Naive thymus-derived CD4-positive, alpha-beta T cell (primary cell): ENCODE measurements at regions of chr3 and their contacts with region 1.

Region 1: GRCh38 chr3:17841190-17841828 is 98.9 kb upstream of the TBC1D5 start:
- DNase-seq: peak; percentile 35 to 73 (median 57)
- ATAC-seq: peak; percentile 89
- H3K4me3 ChIP-seq: no peak overlapping the region
- H3K4me3 Mint-ChIP-seq: no peak overlapping the region
- H3K27ac ChIP-seq: no peak overlapping the region
- H3K27ac Mint-ChIP-seq: no peak overlapping the region
- H3K4me1 ChIP-seq: no peaks in the 10 kb centered on the region
- H3K4me1 Mint-ChIP-seq: peaks cover 0 to 2% (median 0%) of the 10 kb centered on the region in 7 donors
- H3K27me3 ChIP-seq: no peaks in the 10 kb centered on the region
- H3K27me3 Mint-ChIP-seq: peaks cover 0 to 8% (median 6%) of the 10 kb centered on the region in 5 donors

Region 2: GRCh38 chr3:17412950-17413530 is 428.3 kb before region 1 on chr3:
- CTCF ChIA-PET with region 1: interaction called, 5 read pairs
- POLR2A ChIA-PET with region 1: no interaction called
- intact Hi-C with region 1: loop called in 1 of 2 experiments (anchors 5 kb)
- DNase-seq: peak in 6 of 9 donors; percentile 21 to 53 (median 41)
- ATAC-seq: peak; percentile 69
- H3K4me3 ChIP-seq: no peak overlapping the region
- H3K4me3 Mint-ChIP-seq: no peak overlapping the region
- H3K27ac ChIP-seq: no peak overlapping the region
- H3K27ac Mint-ChIP-seq: peak overlapping the region in 1 of 9 donors; percentile 51
- H3K4me1 ChIP-seq: no peaks in the 10 kb centered on the region
- H3K4me1 Mint-ChIP-seq: no peaks in the 10 kb centered on the region
- H3K27me3 ChIP-seq: no peaks in the 10 kb centered on the region
- H3K27me3 Mint-ChIP-seq: no peaks in the 10 kb centered on the region

Region 3: DNA sequence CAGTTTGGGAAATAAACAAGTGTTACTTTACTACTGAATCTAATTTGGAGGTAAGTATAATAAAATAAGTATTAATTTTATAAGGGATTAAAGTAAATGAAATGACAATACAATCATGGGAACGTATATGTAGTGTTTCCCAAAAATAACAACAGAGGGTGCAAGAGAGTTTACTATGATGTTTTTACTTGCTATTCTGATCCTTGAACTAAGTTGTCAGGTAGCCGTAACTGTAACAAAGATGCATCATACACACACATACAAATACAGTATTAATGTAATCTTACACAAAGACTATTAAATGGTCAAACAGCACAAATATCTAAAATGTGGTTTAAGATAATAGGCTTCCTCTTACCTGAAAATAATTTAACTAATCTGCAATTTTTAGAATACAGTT is 410.3 kb before region 1 on chr3:
- CTCF ChIA-PET with region 1: interaction called, 5 read pairs
- POLR2A ChIA-PET with region 1: no interaction called
- intact Hi-C with region 1: loop called (anchors 1 kb)
- DNase-seq: peak in 3 of 9 donors; percentile 3 to 12 (median 7)
- ATAC-seq: no peak
- H3K4me3 ChIP-seq: no peak overlapping the region
- H3K4me3 Mint-ChIP-seq: no peak overlapping the region
- H3K27ac ChIP-seq: no peak overlapping the region
- H3K27ac Mint-ChIP-seq: no peak overlapping the region
- H3K4me1 ChIP-seq: no peaks in the 10 kb centered on the region
- H3K4me1 Mint-ChIP-seq: peaks cover 0 to 3% (median 0%) of the 10 kb centered on the region in 7 donors
- H3K27me3 ChIP-seq: no peaks in the 10 kb centered on the region
- H3K27me3 Mint-ChIP-seq: no peaks in the 10 kb centered on the region

Region 4: DNA sequence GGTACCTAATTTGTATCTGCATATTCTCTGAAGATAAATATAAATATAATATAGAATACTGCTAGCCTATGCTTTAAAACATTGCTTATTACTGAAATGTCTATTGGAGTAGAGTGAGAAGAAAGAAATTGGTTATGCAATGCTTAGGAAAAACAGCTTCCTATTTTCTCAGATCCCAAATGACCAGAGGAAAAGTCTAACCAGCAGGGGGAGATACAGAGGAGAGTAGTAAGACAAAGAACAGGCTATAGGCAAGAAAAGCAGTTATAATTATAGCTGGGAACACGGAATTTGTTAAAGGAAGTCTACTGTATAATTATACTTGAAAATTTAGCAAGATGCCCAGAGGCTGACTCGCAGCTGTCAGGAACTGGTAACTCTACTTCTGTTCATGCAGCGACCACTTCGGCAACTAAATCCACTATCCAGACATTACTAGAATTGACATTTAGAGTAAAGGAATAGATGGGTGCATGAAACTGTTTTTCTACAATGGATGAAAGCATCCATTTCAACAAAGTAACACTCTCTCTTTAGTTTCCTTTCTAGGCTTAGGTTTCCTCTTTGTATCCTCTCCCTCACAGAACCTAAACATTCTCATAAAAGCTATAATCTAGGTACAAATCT is 196.1 kb before region 1 on chr3:
- CTCF ChIA-PET with region 1: interaction called, 44 read pairs
- POLR2A ChIA-PET with region 1: no interaction called
- intact Hi-C with region 1: loop called in 1 of 2 experiments (anchors 1 kb)
- DNase-seq: peak in 6 of 9 donors; percentile 1 to 19 (median 12)
- ATAC-seq: no peak
- H3K4me3 ChIP-seq: no peak overlapping the region
- H3K4me3 Mint-ChIP-seq: no peak overlapping the region
- H3K27ac ChIP-seq: no peak overlapping the region
- H3K27ac Mint-ChIP-seq: no peak overlapping the region
- H3K4me1 ChIP-seq: no peaks in the 10 kb centered on the region
- H3K4me1 Mint-ChIP-seq: peaks cover 0 to 7% (median 3%) of the 10 kb centered on the region in 7 donors
- H3K27me3 ChIP-seq: no peaks in the 10 kb centered on the region
- H3K27me3 Mint-ChIP-seq: no peaks in the 10 kb centered on the region